H1 (cell line): ENCODE measurements at regions of chr19 and their contacts with region 1.

Region 1: GRCh38 chr19:40139533-40140287 is 49.0 kb upstream of the ZNF780A start:
- DNase-seq: peak in 1 of 2 experiments; percentile 47
- H3K4me3 ChIP-seq: no peak overlapping the region
- H3K27ac ChIP-seq: no peak overlapping the region
- H3K4me1 ChIP-seq: no peaks in the 10 kb centered on the region
- H3K27me3 ChIP-seq: no peaks in the 10 kb centered on the region; a peak in 1 of 7 replicates
- CTCF ChIP-seq: peak in 2 of 3 experiments; percentile 66 to 69; a peak in 3 of 4 replicates
- EP300 ChIP-seq: no peak
- POLR2A ChIP-seq: no peak
- RAD21 ChIP-seq: peak; percentile 94 to 96

Region 2: DNA sequence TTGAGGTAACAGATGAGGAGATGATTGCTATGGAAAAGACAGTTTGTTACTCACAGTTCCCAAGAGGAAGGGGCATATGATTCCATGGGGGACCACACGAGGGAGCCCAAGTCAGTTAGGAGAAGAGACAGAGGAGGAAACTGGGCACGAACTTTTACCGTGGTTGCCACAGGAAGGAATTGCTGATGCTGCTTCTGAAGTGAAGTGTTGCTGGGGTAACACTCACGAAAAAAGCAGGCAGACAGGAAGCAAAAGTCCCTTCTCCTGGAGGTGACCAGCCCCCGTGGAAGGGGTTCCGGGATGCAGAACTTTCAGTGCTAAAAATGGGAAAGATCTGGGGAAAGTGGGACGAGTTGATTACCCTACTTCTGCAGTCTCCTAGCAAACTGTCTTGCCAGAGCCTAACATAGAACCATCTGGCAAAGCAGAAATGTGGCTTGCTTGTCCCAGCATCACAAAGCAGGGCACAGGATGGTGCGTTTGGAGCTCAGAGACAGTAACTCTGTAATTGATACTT is 16.1 kb after region 1 on chr19:
- CTCF ChIA-PET with region 1: interaction called, 37 read pairs
- POLR2A ChIA-PET with region 1: no interaction called
- DNase-seq: peak in 1 of 2 experiments; percentile 15
- H3K4me3 ChIP-seq: no peak overlapping the region
- H3K27ac ChIP-seq: no peak overlapping the region
- H3K4me1 ChIP-seq: no peaks in the 10 kb centered on the region
- H3K27me3 ChIP-seq: no peaks in the 10 kb centered on the region
- CTCF ChIP-seq: peak; percentile 30 to 65 (median 37); a peak in 3 of 4 replicates
- EP300 ChIP-seq: no peak
- POLR2A ChIP-seq: no peak
- RAD21 ChIP-seq: peak; percentile 57 to 58

Region 3: GRCh38 chr19:40411125-40411842 is 271.6 kb after region 1 on chr19:
- CTCF ChIA-PET with region 1: no interaction called
- POLR2A ChIA-PET with region 1: no interaction called
- DNase-seq: no peak
- H3K4me3 ChIP-seq: no peak overlapping the region
- H3K27ac ChIP-seq: no peak overlapping the region
- H3K4me1 ChIP-seq: peaks cover 7 to 21% (median 13%) of the 10 kb centered on the region in 4 experiments
- H3K27me3 ChIP-seq: no peaks in the 10 kb centered on the region
- CTCF ChIP-seq: no peak
- EP300 ChIP-seq: no peak
- POLR2A ChIP-seq: no peak
- RAD21 ChIP-seq: no peak